Left cardiac atrium (tissue), 4 donors: ENCODE measurements at regions of chr10 and their contacts with region 1.

Region 1: GRCh38 chr10:101095542-101096213 is 33.9 kb downstream of the KAZALD1 start:
- DNase-seq: peak; percentile 68
- ATAC-seq: peak; percentile 70 to 84

Region 2: DNA sequence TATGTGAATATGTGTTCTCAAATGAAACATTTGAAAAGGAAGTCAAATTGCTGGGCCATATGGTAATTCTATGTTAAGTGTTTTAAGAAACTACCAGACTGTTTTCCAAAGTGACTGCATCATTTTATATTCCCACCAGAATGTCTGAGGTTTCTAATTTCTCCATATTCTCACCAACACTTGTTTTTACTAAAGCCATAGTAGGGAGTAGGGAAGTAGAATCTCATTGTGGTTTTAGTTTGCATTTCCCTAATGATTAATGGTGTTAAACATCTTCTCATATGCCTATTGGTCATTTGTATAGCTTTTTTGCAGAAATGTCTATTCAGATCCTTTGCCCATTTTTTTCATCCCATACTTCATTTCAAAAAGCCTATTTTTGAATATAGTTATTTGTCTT is 135.4 kb before region 1 on chr10:
- intact Hi-C with region 1: no loop called
- DNase-seq: no peak
- ATAC-seq: no peak

Region 3: DNA sequence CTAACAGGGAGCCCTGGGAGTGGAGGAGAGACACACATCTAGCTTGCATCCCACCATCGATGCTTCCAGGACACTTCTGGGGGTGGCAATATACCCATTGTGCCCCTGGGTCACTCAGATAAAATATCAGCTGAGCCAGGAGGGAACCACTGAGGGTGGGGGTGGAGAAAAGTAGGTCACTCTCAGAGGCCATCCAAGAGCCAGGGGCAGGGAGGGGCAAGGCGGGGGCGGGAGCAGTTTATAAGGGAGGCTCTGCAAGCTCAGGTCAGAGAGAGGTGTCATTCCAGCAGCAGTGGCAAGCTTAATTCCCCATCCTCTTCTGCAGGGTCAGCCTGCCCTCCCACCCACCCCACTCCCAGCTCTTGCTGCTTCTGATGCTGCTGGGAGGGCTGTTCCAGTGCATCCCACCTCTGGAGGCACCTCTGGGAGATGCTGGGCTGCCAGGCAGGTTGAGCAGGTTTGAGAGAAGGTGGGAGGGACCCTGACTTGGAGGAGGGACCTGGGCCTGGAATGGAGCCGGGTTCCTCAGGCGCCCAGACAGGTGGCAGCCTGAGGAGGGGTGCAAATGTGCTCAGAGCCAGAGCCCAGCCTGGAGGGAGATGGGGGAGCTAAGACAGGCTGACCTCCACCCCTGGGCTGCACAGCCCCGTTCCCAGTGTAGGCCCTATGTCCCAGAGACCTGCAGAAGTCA is 15.3 kb after region 1 on chr10:
- intact Hi-C with region 1: no loop called
- DNase-seq: no peak
- ATAC-seq: no peak

Region 4: DNA sequence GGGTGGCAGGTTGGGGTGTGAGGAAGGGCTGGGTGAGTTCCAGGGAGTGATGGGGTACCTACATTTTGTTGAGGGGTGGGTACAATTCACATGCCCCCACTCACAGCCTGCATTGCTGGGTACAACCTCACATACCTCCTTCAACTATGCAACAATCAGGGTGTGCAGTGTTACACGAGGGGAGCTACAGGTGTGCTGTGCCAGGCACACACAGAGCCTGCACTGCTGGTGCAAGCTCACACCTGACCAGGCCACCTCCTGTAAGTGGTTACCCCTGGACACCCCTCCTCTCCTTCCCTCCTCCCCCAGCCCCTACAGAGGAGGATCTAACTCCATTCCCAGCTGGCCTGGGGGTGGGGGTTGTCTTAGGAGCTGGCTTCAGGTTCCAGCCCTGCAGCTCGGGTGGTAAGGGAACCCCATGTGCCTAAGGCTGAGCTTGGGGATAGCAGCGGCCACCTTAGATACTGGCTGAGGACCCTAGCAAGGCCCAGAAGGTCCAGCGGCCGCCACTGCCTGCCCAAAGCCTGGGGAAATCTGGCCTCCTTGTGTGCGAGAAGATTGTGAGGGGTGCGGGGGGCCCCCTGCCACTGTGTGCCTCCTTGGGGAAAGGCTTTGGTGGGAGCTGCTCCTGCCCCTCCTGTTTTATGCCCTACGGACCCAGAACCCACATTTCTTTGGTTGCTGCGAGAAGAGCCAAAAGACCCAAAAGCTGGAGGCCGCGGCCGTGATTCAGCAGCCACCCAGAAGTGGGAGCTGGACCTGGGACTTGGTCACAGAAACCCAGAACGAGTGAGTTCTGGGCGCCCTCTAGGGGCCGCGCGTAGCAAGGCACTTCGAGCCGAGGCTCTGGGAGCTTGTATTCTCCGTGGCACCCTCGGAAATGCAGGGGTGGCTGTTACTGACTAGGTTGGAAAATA is 46.2 kb after region 1 on chr10:
- intact Hi-C with region 1: loop called (anchors 1 to 2 kb)
- DNase-seq: peak; percentile 78
- ATAC-seq: peak; percentile 85 to 89